ENCODE measurements at regions of chr6 and their contacts with region 1.

Region 1: GRCh38 chr6:52503848-52504781 is 72.7 kb downstream of the TRAM2 start:
- DNase-seq: peak; percentile 99
- ATAC-seq: peak; percentile 77
- H3K4me3 ChIP-seq: peak overlapping the region; percentile 46; the same call in 1 of the 2 replicates
- H3K27ac ChIP-seq: peak overlapping the region; percentile 65
- H3K4me1 ChIP-seq: peaks cover 34% of the 10 kb centered on the region
- H3K27me3 ChIP-seq: no peaks in the 10 kb centered on the region
- CTCF ChIP-seq: no peak

Region 2: DNA sequence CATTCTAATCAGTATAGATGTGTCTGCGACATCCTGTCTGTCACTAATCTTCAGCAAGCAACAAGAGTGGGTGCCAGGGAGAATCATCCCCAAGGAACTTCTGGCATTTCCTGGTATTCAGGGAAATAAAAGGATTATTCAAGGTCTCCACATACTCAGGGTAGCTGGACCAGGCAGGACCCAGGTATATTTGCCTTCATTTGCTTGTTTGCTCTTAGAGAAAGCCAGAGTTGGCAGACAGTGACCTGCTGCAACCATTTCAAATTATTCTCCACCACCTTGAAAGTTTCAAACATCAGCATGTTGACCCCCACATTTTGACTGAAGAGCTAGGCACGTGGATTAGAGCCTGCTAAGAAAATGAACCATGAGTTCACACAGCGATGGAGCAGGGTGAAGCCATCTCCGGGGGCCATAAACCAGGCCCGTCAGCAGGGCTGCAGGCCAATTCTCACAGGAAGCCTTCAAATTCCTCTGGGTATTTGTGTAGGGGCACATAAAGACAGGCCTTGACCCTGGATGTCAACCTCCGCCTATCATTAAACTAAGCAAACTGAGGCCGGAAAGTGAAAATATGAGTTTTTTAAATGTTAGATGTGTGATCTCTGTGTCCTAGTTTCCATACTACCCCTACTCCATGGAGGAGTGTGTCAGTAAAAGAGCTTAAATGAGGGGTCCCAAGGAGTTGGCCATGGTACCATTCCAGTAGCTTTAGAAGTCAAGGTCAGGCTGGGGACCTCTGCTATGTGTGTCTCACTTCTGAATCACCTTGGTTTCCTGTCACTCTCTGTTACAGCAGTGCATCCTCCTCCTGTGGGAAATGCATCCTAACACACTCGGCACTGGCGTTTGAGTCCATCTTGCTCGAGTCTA is 39.9 kb after region 1 on chr6:
- CTCF ChIA-PET with region 1: no interaction called
- POLR2A ChIA-PET with region 1: no interaction called
- intact Hi-C with region 1: loop called (anchors 5 kb)
- DNase-seq: peak; percentile 60
- ATAC-seq: peak; percentile 53
- H3K4me3 ChIP-seq: peak overlapping the region; percentile 17; the same call in 1 of the 2 replicates
- H3K27ac ChIP-seq: peak overlapping the region; percentile 47
- H3K4me1 ChIP-seq: peaks cover 67% of the 10 kb centered on the region
- H3K27me3 ChIP-seq: no peaks in the 10 kb centered on the region
- CTCF ChIP-seq: no peak

Region 3: DNA sequence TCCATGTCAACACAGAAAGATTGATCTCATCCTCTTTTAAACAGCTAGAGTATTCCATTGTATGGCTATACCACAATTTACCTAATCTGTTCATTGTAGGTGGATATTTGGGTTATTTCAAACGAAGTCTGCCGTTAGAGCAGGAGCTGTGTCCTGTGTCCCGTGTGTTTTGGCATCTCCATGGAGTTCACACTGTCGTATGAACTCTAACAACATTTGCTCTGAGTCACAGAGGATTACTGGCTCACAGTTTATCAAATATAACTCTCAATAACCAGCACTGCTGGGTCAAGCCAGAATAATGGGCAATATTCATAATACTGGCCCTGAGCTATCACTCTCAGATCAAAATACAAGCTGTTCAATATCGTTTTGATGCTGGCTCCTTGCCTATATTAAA is 56.3 kb after region 1 on chr6:
- CTCF ChIA-PET with region 1: no interaction called
- POLR2A ChIA-PET with region 1: no interaction called
- intact Hi-C with region 1: no loop called
- DNase-seq: no peak
- ATAC-seq: peak; percentile 45; the same call in 1 of the 2 replicates
- H3K4me3 ChIP-seq: no peak overlapping the region
- H3K27ac ChIP-seq: no peak overlapping the region
- H3K4me1 ChIP-seq: peaks cover 6% of the 10 kb centered on the region; the same call in 1 of the 2 replicates
- H3K27me3 ChIP-seq: no peaks in the 10 kb centered on the region
- CTCF ChIP-seq: no peak

Region 4: GRCh38 chr6:52577022-52577777 is 73.1 kb after region 1 on chr6 and contains the start of gene TRAM2:
- CTCF ChIA-PET with region 1: no interaction called
- POLR2A ChIA-PET with region 1: interaction called, 3 read pairs
- intact Hi-C with region 1: loop called (anchors 2 kb)
- DNase-seq: peak; percentile 81
- ATAC-seq: peak; percentile 80
- H3K4me3 ChIP-seq: peak within 1 kb of the TSS; percentile 87
- H3K27ac ChIP-seq: peak within 1 kb of the TSS; percentile 64
- H3K4me1 ChIP-seq: peaks cover 33% of the 10 kb centered on the region
- H3K27me3 ChIP-seq: no peaks in the 10 kb centered on the region
- CTCF ChIP-seq: peak; percentile 29; the same call in 1 of the 2 replicates
- total RNA-seq, gene TRAM2: 17.7 and 19.6 TPM in 2 replicates

Measured in PC-3 (cell line).